HCT116 (cell line): ENCODE measurements at regions of chr2 and their contacts with region 1.

Region 1: DNA sequence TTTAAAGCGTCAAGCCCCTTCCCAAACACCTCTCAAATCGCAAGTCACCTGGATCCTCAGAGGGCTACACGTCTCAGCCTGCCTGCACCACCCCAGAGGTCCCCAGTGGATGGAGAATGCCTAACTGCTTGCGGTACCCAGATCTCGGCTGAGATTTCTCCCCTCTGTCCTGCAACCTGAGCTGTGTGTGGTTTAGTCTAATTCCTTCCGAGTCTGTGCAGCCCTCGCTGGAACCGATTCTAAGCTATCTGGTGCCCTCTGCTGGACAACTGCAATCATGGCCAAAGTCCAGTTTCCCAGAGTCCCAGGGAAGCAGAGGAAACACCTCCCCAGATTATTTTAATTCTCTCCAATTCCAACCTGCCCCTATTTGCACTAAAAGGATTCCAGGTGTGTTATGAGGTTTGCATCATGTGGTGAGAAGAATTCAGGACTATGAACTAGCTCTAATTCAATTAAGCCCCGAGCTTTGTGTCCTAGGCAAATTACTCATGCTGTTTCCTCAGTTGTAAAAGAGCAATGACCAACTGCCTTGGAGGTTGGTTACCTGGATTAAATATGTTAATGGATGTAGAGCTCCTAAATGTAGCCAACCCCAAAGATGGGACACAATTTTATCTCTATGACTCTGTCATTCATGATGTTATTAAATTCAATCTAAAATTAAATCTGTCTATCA is 276.1 kb upstream of the NCKAP5 start:
- DNase-seq: peak; percentile 50
- ATAC-seq: peak; percentile 94
- H3K4me3 ChIP-seq: no peak overlapping the region
- H3K27ac ChIP-seq: no peak overlapping the region
- H3K4me1 ChIP-seq: no peaks in the 10 kb centered on the region
- H3K27me3 ChIP-seq: peaks cover 6% of the 10 kb centered on the region; the same call in 1 of the 2 replicates
- CTCF ChIP-seq: peak; percentile 66 to 94 (median 80); a peak in 5 of 6 replicates
- POLR2A ChIP-seq: no peak
- RAD21 ChIP-seq: peak; percentile 88

Region 2: GRCh38 chr2:132267105-132267497 is 1577.3 kb before region 1 on chr2:
- CTCF ChIA-PET with region 1: no interaction called
- POLR2A ChIA-PET with region 1: no interaction called
- RAD21 ChIA-PET with region 1: no interaction called
- intact Hi-C with region 1: loop called (anchors 1 kb)
- DNase-seq: no peak
- ATAC-seq: no peak
- H3K4me3 ChIP-seq: no peak overlapping the region
- H3K27ac ChIP-seq: no peak overlapping the region
- H3K4me1 ChIP-seq: peaks cover 0 to 6% of the 10 kb centered on the region in 2 experiments; a peak in 2 of 4 replicates
- H3K27me3 ChIP-seq: peaks cover 13% of the 10 kb centered on the region
- CTCF ChIP-seq: no peak
- POLR2A ChIP-seq: no peak
- RAD21 ChIP-seq: no peak

Region 3: GRCh38 chr2:132547074-132547687 is 1297.2 kb before region 1 on chr2:
- CTCF ChIA-PET with region 1: interaction called, 4 read pairs
- POLR2A ChIA-PET with region 1: no interaction called
- RAD21 ChIA-PET with region 1: no interaction called
- intact Hi-C with region 1: loop called (anchors 2 kb)
- DNase-seq: peak; percentile 36
- ATAC-seq: peak; percentile 68
- H3K4me3 ChIP-seq: no peak overlapping the region
- H3K27ac ChIP-seq: no peak overlapping the region
- H3K4me1 ChIP-seq: no peaks in the 10 kb centered on the region
- H3K27me3 ChIP-seq: no peaks in the 10 kb centered on the region
- CTCF ChIP-seq: peak; percentile 39 to 73 (median 57); a peak in 5 of 6 replicates
- POLR2A ChIP-seq: no peak
- RAD21 ChIP-seq: peak; percentile 70

Region 4: GRCh38 chr2:132670496-132671150 is 1173.7 kb before region 1 on chr2:
- CTCF ChIA-PET with region 1: no interaction called
- POLR2A ChIA-PET with region 1: no interaction called
- RAD21 ChIA-PET with region 1: no interaction called
- intact Hi-C with region 1: loop called (anchors 10 kb)
- DNase-seq: no peak
- ATAC-seq: peak; percentile 76
- H3K4me3 ChIP-seq: peak overlapping the region; percentile 6 to 17; a peak in 2 of 4 replicates
- H3K27ac ChIP-seq: no peak overlapping the region
- H3K4me1 ChIP-seq: peaks cover 10 to 18% of the 10 kb centered on the region in 2 experiments
- H3K27me3 ChIP-seq: peaks cover 72% of the 10 kb centered on the region
- CTCF ChIP-seq: no peak
- POLR2A ChIP-seq: no peak
- RAD21 ChIP-seq: no peak

Region 5: GRCh38 chr2:133171393-133172004 is 672.9 kb before region 1 on chr2:
- CTCF ChIA-PET with region 1: interaction called, 3 read pairs
- POLR2A ChIA-PET with region 1: no interaction called
- RAD21 ChIA-PET with region 1: no interaction called
- intact Hi-C with region 1: loop called (anchors 10 kb)
- DNase-seq: peak; percentile 48
- ATAC-seq: peak; percentile 54; the same call in 1 of the 2 replicates
- H3K4me3 ChIP-seq: no peak overlapping the region
- H3K27ac ChIP-seq: no peak overlapping the region
- H3K4me1 ChIP-seq: no peaks in the 10 kb centered on the region
- H3K27me3 ChIP-seq: no peaks in the 10 kb centered on the region; the same call in 1 of the 2 replicates
- CTCF ChIP-seq: peak; percentile 44 to 65 (median 44); a peak in 5 of 6 replicates
- POLR2A ChIP-seq: no peak
- RAD21 ChIP-seq: peak; percentile 77

Region 6: GRCh38 chr2:133521146-133521745 is 323.1 kb before region 1 on chr2:
- CTCF ChIA-PET with region 1: interaction called, 29 read pairs
- POLR2A ChIA-PET with region 1: no interaction called
- RAD21 ChIA-PET with region 1: interaction called in 1 of 2 experiments, 4 read pairs
- intact Hi-C with region 1: loop called (anchors 1 kb)
- DNase-seq: no peak
- ATAC-seq: no peak
- H3K4me3 ChIP-seq: no peak overlapping the region
- H3K27ac ChIP-seq: no peak overlapping the region
- H3K4me1 ChIP-seq: no peaks in the 10 kb centered on the region
- H3K27me3 ChIP-seq: no peaks in the 10 kb centered on the region
- CTCF ChIP-seq: no peak
- POLR2A ChIP-seq: no peak
- RAD21 ChIP-seq: no peak

Region 7: DNA sequence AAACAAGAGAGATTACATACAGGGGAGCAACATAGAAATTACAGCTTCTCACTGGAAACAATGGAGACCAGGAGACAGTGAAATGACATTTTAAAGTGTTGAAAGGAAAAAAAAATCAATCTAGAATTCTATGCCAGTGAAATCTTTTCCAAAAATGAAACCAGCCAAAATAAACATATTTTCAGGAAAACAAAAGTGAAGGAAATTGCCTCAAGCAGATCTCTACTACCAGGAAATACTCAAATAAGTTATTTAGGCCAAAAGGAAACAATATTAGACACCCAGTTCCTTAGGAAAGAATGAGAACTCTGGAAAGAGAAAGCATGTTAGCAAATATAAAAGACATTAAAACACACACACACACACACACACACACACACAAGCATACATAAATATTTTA is 63.8 kb after region 1 on chr2:
- CTCF ChIA-PET with region 1: no interaction called
- POLR2A ChIA-PET with region 1: no interaction called
- RAD21 ChIA-PET with region 1: no interaction called
- intact Hi-C with region 1: no loop called
- DNase-seq: no peak
- ATAC-seq: no peak
- H3K4me3 ChIP-seq: no peak overlapping the region
- H3K27ac ChIP-seq: no peak overlapping the region
- H3K4me1 ChIP-seq: no peaks in the 10 kb centered on the region
- H3K27me3 ChIP-seq: 0 out of 2 replicates have a peak, but pooled peaks cover 3% of the 10 kb centered on the region
- CTCF ChIP-seq: no peak
- POLR2A ChIP-seq: no peak
- RAD21 ChIP-seq: no peak